HCT116 (cell line): ENCODE measurements at regions of chr7 and their contacts with region 1.

Region 1: DNA sequence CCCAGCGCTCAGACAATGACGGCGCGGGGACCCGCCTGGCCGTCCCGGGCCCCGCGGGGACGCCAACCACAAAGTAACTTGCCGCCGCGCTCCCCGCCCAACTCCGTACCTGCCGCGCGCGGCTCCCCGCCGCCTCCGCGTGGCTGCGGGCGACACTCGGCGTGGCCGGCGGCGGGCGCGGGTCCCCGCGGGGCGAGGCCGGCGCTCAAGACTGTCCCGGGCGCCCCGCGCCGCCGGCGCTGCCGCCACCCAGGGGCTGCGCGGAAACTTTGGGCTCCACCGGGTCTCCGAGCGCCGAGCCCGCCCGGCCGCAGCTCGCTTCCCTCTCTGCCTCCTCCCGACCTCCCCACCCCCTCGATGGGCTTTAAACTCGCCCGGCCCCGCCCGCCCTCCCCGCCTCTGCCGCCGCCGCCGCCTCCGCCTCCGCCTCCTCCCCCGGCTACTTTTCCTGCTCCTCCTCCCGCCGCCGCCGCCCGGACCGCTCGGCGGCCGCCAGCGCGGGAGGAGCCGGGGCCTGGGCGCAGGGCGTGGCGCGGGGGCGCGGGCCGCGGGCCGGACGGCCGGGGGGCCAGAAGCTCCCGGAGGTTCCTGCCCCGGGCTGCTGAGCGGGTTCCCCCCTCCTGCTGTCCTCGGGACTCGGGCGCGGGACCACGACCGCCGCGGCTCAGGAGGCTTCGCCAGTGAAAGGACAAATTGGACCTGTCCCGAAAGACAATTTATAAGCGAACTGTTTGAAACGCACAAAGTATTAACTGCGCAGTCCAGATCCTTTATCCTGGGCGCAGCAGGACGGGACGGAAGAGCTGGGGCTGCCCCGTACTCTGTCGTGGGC is 10.6 kb upstream of the GRB10 start:
- DNase-seq: no peak
- ATAC-seq: peak; percentile 72
- H3K4me3 ChIP-seq: peak overlapping the region; percentile 56 to 61
- H3K27ac ChIP-seq: peak overlapping the region; percentile 81; the same call in 1 of the 2 replicates
- H3K4me1 ChIP-seq: peaks cover 11 to 13% of the 10 kb centered on the region in 2 experiments; a peak in 3 of 4 replicates
- H3K27me3 ChIP-seq: peaks cover 8% of the 10 kb centered on the region; the same call in 1 of the 2 replicates
- CTCF ChIP-seq: no peak
- POLR2A ChIP-seq: peak; percentile 36
- RAD21 ChIP-seq: no peak

Region 2: GRCh38 chr7:50317221-50317678 is 476.1 kb before region 1 on chr7:
- CTCF ChIA-PET with region 1: no interaction called
- POLR2A ChIA-PET with region 1: no interaction called
- RAD21 ChIA-PET with region 1: no interaction called
- intact Hi-C with region 1: no loop called
- DNase-seq: no peak
- ATAC-seq: no peak
- H3K4me3 ChIP-seq: no peak overlapping the region
- H3K27ac ChIP-seq: no peak overlapping the region
- H3K4me1 ChIP-seq: no peaks in the 10 kb centered on the region
- H3K27me3 ChIP-seq: peaks cover 23% of the 10 kb centered on the region; the same call in 1 of the 2 replicates
- CTCF ChIP-seq: no peak
- POLR2A ChIP-seq: no peak
- RAD21 ChIP-seq: no peak

Region 3: GRCh38 chr7:50982626-50983025 is 189.3 kb after region 1 on chr7:
- CTCF ChIA-PET with region 1: no interaction called
- POLR2A ChIA-PET with region 1: no interaction called
- RAD21 ChIA-PET with region 1: no interaction called
- intact Hi-C with region 1: loop called (anchors 5 kb)
- DNase-seq: no peak
- ATAC-seq: peak; percentile 63
- H3K4me3 ChIP-seq: no peak overlapping the region
- H3K27ac ChIP-seq: no peak overlapping the region
- H3K4me1 ChIP-seq: no peaks in the 10 kb centered on the region
- H3K27me3 ChIP-seq: no peaks in the 10 kb centered on the region
- CTCF ChIP-seq: no peak
- POLR2A ChIP-seq: no peak
- RAD21 ChIP-seq: no peak

Region 4: DNA sequence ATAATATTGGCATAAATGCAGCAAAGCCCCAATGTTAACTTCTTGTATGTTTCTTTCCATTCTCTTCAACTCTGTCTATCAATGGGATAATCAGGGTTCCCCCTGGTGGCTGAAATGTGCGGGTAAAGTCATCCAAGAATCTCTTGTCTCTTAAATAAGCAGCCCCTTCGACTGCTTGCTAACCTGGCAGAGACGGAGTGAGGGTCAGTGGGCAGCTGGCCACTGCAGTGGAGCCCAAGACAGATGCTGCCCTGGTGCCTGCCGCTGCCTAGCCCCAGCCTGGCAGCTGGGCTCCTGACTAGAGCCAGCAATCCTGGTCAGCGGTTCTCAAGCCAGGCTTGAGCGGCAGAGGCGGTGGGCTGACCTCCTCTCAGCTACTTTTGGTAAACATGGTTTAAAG is 274.4 kb after region 1 on chr7:
- CTCF ChIA-PET with region 1: no interaction called
- POLR2A ChIA-PET with region 1: no interaction called
- RAD21 ChIA-PET with region 1: no interaction called
- intact Hi-C with region 1: loop called (anchors 5 kb)
- DNase-seq: peak; percentile 35
- ATAC-seq: peak; percentile 83
- H3K4me3 ChIP-seq: no peak overlapping the region
- H3K27ac ChIP-seq: no peak overlapping the region
- H3K4me1 ChIP-seq: peaks cover 0 to 2% of the 10 kb centered on the region in 2 experiments; a peak in 1 of 4 replicates
- H3K27me3 ChIP-seq: no peaks in the 10 kb centered on the region
- CTCF ChIP-seq: peak; percentile 49 to 85 (median 77); a peak in 5 of 6 replicates
- POLR2A ChIP-seq: no peak
- RAD21 ChIP-seq: peak; percentile 69